PC-9 (cell line): ENCODE measurements at regions of chr17 and their contacts with region 1.

Region 1: GRCh38 chr17:44981221-44981968 is 13.3 kb upstream of the C1QL1 start:
- DNase-seq: peak; percentile 48 to 88
- H3K4me3 ChIP-seq: peak overlapping the region; percentile 55; the same call in 1 of the 2 replicates
- H3K27ac ChIP-seq: peak overlapping the region; percentile 92
- H3K4me1 ChIP-seq: peaks cover 19% of the 10 kb centered on the region
- H3K27me3 ChIP-seq: peaks cover 3% of the 10 kb centered on the region; the same call in 1 of the 2 replicates
- CTCF ChIP-seq: no peak

Region 2: DNA sequence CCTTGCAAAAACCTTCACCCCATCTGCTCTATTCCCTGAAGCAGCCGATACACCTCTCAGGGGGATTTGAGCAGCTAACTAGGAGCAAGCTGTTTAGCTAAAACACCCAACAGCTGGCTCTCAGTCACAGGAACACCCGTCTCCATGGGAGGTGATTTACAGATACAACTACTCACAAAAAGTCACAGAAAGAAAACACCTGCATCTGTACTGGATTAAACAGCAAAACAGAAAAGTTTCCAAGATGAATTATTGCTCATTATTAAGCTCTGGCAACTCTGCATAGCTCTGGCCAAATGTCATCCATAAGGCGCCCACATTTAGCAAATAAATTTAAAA is 173.6 kb before region 1 on chr17:
- CTCF ChIA-PET with region 1: interaction called, 14 read pairs
- POLR2A ChIA-PET with region 1: no interaction called
- intact Hi-C with region 1: no loop called
- DNase-seq: no peak
- H3K4me3 ChIP-seq: no peak overlapping the region
- H3K27ac ChIP-seq: no peak overlapping the region
- H3K4me1 ChIP-seq: no peaks in the 10 kb centered on the region
- H3K27me3 ChIP-seq: no peaks in the 10 kb centered on the region
- CTCF ChIP-seq: no peak

Region 3: DNA sequence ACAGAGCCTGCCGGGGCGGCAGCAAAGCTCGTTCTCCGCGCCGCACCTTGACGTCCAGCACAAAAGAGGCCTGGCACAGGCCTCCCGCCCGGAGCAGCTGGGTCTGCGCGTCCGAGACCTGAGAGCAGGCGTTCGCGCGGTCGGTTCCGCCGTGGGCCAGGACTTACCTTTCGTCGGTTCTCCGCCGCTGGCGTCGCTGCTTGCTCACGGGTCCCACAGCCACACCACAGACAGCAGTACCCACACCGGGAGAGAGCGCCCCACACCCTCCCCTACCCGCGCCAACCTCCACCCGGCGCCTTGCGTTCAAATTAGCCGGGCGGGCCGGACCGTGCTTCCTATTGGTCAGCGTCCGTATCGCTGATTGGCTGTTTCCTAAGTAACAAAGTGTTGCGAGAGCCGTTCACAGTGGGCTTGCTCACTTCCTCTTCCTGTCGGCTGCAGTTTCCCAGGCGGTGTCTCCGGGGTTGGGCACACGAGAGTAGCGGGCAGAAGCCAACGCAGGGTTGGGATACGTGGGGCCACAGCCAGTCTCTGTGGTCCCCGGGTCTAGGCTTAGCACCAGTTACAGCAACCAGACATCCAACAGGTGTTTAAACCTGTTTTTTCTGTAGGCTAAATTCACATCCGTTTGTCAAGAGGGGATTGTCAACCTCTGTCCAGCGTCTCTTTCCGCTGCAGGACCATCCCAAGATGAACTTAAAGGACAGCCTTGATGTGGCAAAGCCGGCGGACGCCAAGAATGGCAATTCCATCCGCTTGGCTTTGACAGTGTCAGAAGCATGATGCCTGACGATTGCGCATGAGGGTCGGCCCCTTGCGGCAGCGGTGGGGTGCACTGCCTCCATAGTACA is 33.7 kb before region 1 on chr17 and contains the start of gene KIF18B:
- CTCF ChIA-PET with region 1: no interaction called
- POLR2A ChIA-PET with region 1: no interaction called
- intact Hi-C with region 1: loop called (anchors 2 kb)
- DNase-seq: peak; percentile 87 to 88
- H3K4me3 ChIP-seq: peak within 1 kb of the TSS; percentile 86
- H3K27ac ChIP-seq: peak within 1 kb of the TSS; percentile 41; the same call in 1 of the 2 replicates
- H3K4me1 ChIP-seq: peaks cover 27% of the 10 kb centered on the region
- H3K27me3 ChIP-seq: no peaks in the 10 kb centered on the region
- CTCF ChIP-seq: no peak
- total RNA-seq, gene KIF18B: 48.2 and 58.5 TPM in 2 replicates

Region 4: GRCh38 chr17:44961921-44962350 is 19.5 kb before region 1 on chr17:
- CTCF ChIA-PET with region 1: interaction called, 15 read pairs
- POLR2A ChIA-PET with region 1: no interaction called
- intact Hi-C with region 1: no loop called
- DNase-seq: no peak
- H3K4me3 ChIP-seq: no peak overlapping the region
- H3K27ac ChIP-seq: no peak overlapping the region
- H3K4me1 ChIP-seq: peaks cover 11% of the 10 kb centered on the region; the same call in 1 of the 2 replicates
- H3K27me3 ChIP-seq: peaks cover 11% of the 10 kb centered on the region; the same call in 1 of the 2 replicates
- CTCF ChIP-seq: no peak

Region 5: GRCh38 chr17:44968226-44969143 is 12.9 kb before region 1 on chr17 and contains the start of gene C1QL1:
- CTCF ChIA-PET with region 1: interaction called, 10 read pairs
- POLR2A ChIA-PET with region 1: interaction called, 7 read pairs
- intact Hi-C with region 1: no loop called
- DNase-seq: peak; percentile 63 to 89
- H3K4me3 ChIP-seq: peak within 1 kb of the TSS; percentile 47
- H3K27ac ChIP-seq: no peak within 1 kb of the TSS
- H3K4me1 ChIP-seq: no peaks in the 10 kb centered on the region
- H3K27me3 ChIP-seq: peaks cover 17% of the 10 kb centered on the region; the same call in 1 of the 2 replicates
- CTCF ChIP-seq: no peak
- total RNA-seq, gene C1QL1: 0.93 and 1.3 TPM in 2 replicates